Motor neuron (in vitro differentiated cells): ENCODE measurements at regions of chr22 and their contacts with region 1.

Region 1: DNA sequence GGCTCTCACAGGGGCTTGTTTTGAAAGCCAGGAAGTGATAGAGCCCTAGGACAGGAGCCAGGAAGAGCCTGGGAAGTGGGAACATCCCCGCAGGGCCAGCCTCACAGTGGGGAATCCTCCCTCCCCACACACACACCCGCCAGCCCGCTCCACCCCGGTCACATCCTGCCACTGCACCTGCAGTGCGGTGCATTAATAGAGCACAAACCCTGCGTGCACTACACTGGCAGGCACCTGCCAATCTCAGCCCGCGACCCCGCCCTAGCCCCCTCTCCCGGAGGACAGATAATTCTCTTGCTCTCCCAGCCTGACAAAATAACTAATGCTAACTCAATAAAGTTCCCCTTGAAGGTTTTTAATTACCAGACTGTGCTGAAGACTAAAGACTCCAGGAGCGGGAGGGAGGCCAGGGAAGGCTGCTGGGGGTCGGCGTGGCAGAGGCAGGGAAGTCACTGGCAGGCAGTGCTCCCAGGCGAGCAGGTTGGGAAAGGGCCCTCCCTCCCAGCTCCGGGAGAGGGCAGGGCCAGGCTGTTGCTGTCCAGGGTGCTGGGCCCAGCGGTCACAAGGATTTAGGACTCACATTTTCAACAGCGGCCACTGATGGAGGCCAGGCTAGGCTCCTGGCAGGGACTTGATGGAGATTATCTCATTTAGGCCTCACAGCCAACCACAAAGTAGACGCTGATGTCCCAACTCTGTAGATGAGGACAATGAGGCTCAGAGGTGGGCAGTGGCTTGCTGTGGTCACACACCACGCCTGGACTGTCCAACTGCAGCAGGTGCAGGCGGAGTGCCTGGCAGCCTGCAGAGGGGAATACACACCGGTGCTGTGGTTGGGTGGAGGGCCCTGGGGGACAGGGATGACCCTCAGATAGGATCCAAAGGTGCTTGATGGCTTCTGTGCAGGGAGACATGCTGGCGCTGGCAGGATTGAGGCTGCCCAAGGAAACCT is 23.9 kb upstream of the TCF20 start:
- ATAC-seq: peak; percentile 54 to 87 (median 74)
- H3K4me3 ChIP-seq: no peak overlapping the region
- H3K27ac ChIP-seq: peak overlapping the region; percentile 1 to 10
- H3K4me1 ChIP-seq: peaks cover 66% of the 10 kb centered on the region in 2 donors

Region 2: DNA sequence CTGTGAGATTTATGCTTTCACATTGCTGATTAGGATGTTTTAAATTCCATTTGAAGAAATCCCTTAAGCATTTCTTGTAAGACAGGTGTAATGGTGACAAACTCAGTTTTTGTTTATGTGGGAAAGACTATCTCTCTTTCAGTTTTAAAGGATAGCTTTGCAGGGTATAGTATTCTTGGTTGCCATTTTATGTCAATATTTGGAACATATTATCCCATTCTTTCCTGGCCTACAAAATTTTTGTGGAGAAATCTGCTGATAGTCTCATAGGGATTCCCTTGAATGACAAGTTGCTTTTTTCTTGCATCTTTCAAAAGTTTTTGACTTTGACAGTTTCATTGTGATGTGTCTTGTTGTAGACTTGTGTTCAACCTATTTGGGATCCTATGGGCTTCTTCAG is 252.5 kb before region 1 on chr22:
- in situ Hi-C with region 1: no loop called
- ATAC-seq: no peak
- H3K4me3 ChIP-seq: no peak overlapping the region
- H3K27ac ChIP-seq: no peak overlapping the region
- H3K4me1 ChIP-seq: no peaks in the 10 kb centered on the region

Region 3: GRCh38 chr22:42437488-42438292 is 143.4 kb after region 1 on chr22:
- in situ Hi-C with region 1: loop called in 3 of 9 experiments (anchors 25 kb)
- ATAC-seq: peak; percentile 75 to 90 (median 84)
- H3K4me3 ChIP-seq: peak overlapping the region in 4 of 5 donors; percentile 20 to 32 (median 25)
- H3K27ac ChIP-seq: no peak overlapping the region
- H3K4me1 ChIP-seq: peaks cover 26 to 30% of the 10 kb centered on the region in 2 donors